IMR-90 (cell line): ENCODE measurements at regions of chr5 and their contacts with region 1.

Region 1: GRCh38 chr5:39314591-39314990 is 49.7 kb downstream of the C9 start:
- DNase-seq: no peak
- ATAC-seq: no peak
- H3K4me3 ChIP-seq: no peak overlapping the region
- H3K27ac ChIP-seq: no peak overlapping the region
- H3K4me1 ChIP-seq: no peaks in the 10 kb centered on the region
- H3K27me3 ChIP-seq: peaks cover 3% of the 10 kb centered on the region; the same call in 1 of the 2 replicates
- CTCF ChIP-seq: no peak
- POLR2A ChIP-seq: no peak
- RAD21 ChIP-seq: no peak

Region 2: GRCh38 chr5:39224196-39224761 is 90.3 kb before region 1 on chr5:
- CTCF ChIA-PET with region 1: no interaction called
- POLR2A ChIA-PET with region 1: no interaction called
- dilution Hi-C with region 1: no loop called
- in situ Hi-C with region 1: no loop called
- intact Hi-C with region 1: no loop called
- DNase-seq: peak; percentile 5
- ATAC-seq: no peak
- H3K4me3 ChIP-seq: no peak overlapping the region
- H3K27ac ChIP-seq: no peak overlapping the region
- H3K4me1 ChIP-seq: no peaks in the 10 kb centered on the region
- H3K27me3 ChIP-seq: peaks cover 12% of the 10 kb centered on the region
- CTCF ChIP-seq: no peak
- POLR2A ChIP-seq: no peak
- RAD21 ChIP-seq: no peak

Region 3: GRCh38 chr5:39264528-39264927 is 50.1 kb before region 1 on chr5:
- CTCF ChIA-PET with region 1: no interaction called
- POLR2A ChIA-PET with region 1: no interaction called
- dilution Hi-C with region 1: no loop called
- in situ Hi-C with region 1: no loop called
- intact Hi-C with region 1: loop called (anchors 5 kb)
- DNase-seq: no peak
- ATAC-seq: no peak
- H3K4me3 ChIP-seq: no peak overlapping the region
- H3K27ac ChIP-seq: no peak overlapping the region
- H3K4me1 ChIP-seq: no peaks in the 10 kb centered on the region
- H3K27me3 ChIP-seq: no peaks in the 10 kb centered on the region
- CTCF ChIP-seq: no peak
- POLR2A ChIP-seq: no peak
- RAD21 ChIP-seq: no peak

Region 4: GRCh38 chr5:39355324-39355723 is 40.7 kb after region 1 on chr5:
- CTCF ChIA-PET with region 1: no interaction called
- POLR2A ChIA-PET with region 1: no interaction called
- dilution Hi-C with region 1: no loop called
- in situ Hi-C with region 1: no loop called
- intact Hi-C with region 1: loop called (anchors 1 kb)
- DNase-seq: no peak
- ATAC-seq: no peak
- H3K4me3 ChIP-seq: no peak overlapping the region
- H3K27ac ChIP-seq: no peak overlapping the region
- H3K4me1 ChIP-seq: no peaks in the 10 kb centered on the region
- H3K27me3 ChIP-seq: peaks cover 6% of the 10 kb centered on the region
- CTCF ChIP-seq: no peak
- POLR2A ChIP-seq: no peak
- RAD21 ChIP-seq: no peak